ENCODE measurements at regions of chr1 and their contacts with region 1.

Region 1: DNA sequence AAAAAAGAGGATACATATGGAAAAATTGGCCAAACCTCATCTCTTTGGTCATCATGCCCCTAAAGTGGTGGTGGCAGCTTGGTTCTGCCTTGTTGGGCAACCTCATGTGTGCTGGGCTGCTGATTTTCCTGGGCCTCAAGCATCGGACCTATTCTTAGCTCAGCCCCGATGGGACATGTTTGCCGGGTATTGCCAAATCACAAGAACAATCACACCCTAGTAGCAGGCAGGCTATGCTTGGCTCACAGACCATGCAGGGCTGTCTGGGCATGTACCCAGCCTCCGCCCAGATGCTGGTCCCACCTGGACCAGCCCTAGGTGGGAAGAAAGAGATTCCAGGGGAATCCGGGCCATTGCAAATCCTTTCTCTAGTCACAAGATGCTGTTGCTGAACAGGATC is 189.4 kb upstream of the FGGY start:
- DNase-seq: peak in 4 of 5 donors; percentile 60 to 80 (median 72)
- ATAC-seq: peak; percentile 93 to 97 (median 95)
- H3K4me3 ChIP-seq: no peak overlapping the region
- H3K27ac ChIP-seq: peak overlapping the region; percentile 24 to 79 (median 61)
- H3K4me1 ChIP-seq: peaks cover 0 to 25% (median 11%) of the 10 kb centered on the region in 12 donors
- H3K27me3 ChIP-seq: no peaks in the 10 kb centered on the region
- CTCF ChIP-seq: no peak
- POLR2A ChIP-seq: no peak

Region 2: GRCh38 chr1:59076612-59077011 is 30.9 kb before region 1 on chr1:
- intact Hi-C with region 1: no loop called
- DNase-seq: no peak
- ATAC-seq: peak in 1 of 4 donors; percentile 14
- H3K4me3 ChIP-seq: no peak overlapping the region
- H3K27ac ChIP-seq: no peak overlapping the region
- H3K4me1 ChIP-seq: peaks cover 0 to 28% (median 6%) of the 10 kb centered on the region in 12 donors
- H3K27me3 ChIP-seq: no peaks in the 10 kb centered on the region
- CTCF ChIP-seq: peak in 8 of 12 donors; percentile 11 to 44 (median 22)
- POLR2A ChIP-seq: no peak

Region 3: DNA sequence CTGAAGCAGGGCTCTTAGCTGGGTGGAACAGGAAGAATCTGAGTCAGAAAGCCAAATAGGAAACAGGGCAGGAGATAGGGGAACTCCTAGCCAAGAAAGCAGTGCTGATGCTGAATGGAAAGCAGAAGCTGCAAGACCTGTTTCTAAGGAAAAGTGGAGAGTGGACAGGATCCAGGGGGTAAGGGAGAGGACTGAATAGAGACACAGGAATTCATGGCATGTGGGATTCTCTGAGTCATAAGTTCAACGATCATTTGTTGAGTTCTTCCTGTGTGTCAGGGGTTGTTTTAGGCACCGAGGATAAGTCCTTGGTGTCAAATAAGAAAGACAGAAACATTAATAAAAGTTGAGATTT is 35.6 kb after region 1 on chr1:
- intact Hi-C with region 1: loop called in 3 of 10 experiments (anchors 5 kb)
- DNase-seq: peak in 2 of 5 donors; percentile 23 to 41
- ATAC-seq: peak in 3 of 4 donors; percentile 25 to 43 (median 32)
- H3K4me3 ChIP-seq: no peak overlapping the region
- H3K27ac ChIP-seq: peak overlapping the region in 10 of 12 donors; percentile 2 to 91 (median 80)
- H3K4me1 ChIP-seq: peaks cover 6 to 74% (median 55%) of the 10 kb centered on the region in 12 donors
- H3K27me3 ChIP-seq: no peaks in the 10 kb centered on the region
- CTCF ChIP-seq: no peak
- POLR2A ChIP-seq: no peak